Caco-2 (cell line): ENCODE measurements at regions of chr11 and their contacts with region 1.

Region 1: DNA sequence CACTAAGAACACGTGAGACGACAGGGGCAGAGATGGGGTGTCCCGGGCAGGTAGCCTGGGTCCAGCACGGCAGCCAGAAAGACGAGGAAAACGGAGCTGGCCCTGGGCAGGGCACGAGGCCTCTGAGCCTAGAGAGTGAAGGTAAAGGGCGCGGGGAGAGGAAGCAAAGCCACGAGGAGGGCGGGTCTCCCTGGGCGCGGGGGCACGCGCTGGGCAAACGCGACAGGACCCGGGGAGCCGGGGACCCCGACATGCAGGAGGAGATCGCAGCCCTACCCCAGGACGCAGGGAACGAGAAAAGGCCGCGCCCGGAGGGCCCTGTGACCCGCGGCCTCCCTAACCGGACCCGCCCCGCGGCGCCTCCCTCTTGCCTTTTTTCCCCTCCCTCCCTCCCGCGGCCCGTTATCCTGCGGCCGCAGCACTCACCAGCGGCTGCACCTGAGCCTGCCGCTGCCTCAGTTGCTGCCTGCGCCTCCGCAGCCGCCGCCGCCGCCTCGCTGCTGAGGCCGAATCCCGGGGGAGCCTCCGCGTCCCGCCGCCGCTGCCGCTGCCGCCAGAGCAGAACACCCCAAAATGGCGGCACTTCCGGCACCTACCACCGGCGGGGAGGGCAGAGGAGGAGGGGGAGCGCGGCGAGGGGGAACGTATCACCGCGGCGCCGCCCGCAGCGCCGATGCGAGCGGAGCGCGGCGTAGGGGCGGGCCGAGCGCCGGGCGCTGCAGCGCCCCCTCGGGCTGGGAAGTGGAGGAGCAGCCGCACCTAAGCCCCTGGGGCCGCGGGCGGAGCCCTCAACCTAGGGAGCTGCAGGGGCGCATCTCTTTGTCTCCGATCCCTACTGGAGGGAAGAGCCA is at the start of gene CELF1:
- DNase-seq: peak; percentile 92 to 95
- H3K4me3 ChIP-seq: peak within 1 kb of the TSS; percentile 96
- H3K4me3 Mint-ChIP-seq: peak within 1 kb of the TSS; percentile 94
- H3K27ac Mint-ChIP-seq: peak within 1 kb of the TSS; percentile 93
- H3K4me1 ChIP-seq: peaks cover 6% of the 10 kb centered on the region; the same call in 1 of the 2 replicates
- H3K4me1 Mint-ChIP-seq: peaks cover 8% of the 10 kb centered on the region
- H3K27me3 ChIP-seq: no peaks in the 10 kb centered on the region
- H3K27me3 Mint-ChIP-seq: no peaks in the 10 kb centered on the region
- CTCF ChIP-seq: peak; percentile 74 to 91
- total RNA-seq, gene CELF1: 146 and 152 TPM in 2 replicates

Region 2: DNA sequence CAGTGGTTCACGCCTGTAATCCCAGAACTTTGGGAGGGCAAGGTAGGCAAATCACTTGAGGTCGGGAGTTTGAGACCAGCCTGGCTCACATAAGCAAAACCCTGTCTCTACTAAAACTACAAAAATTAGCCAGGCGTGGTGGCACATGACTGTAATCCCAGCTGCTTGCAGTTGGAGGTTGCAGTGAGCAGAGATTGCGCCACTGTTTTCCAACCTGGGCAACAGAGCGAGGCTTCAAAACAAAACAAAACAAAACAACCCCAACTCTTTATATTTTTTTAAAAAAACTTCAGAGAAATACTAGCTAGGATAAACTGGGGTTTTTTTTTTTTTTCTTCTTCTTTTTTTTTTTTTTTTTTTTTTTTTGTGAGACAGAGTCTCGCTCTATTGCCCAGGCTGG is 72.0 kb before region 1 on chr11:
- CTCF ChIA-PET with region 1: no interaction called
- POLR2A ChIA-PET with region 1: no interaction called
- intact Hi-C with region 1: loop called (anchors 10 kb)
- DNase-seq: no peak
- H3K4me3 ChIP-seq: no peak overlapping the region
- H3K4me3 Mint-ChIP-seq: no peak overlapping the region
- H3K27ac Mint-ChIP-seq: no peak overlapping the region
- H3K4me1 ChIP-seq: no peaks in the 10 kb centered on the region
- H3K4me1 Mint-ChIP-seq: no peaks in the 10 kb centered on the region
- H3K27me3 ChIP-seq: no peaks in the 10 kb centered on the region
- H3K27me3 Mint-ChIP-seq: no peaks in the 10 kb centered on the region
- CTCF ChIP-seq: no peak

Region 3: DNA sequence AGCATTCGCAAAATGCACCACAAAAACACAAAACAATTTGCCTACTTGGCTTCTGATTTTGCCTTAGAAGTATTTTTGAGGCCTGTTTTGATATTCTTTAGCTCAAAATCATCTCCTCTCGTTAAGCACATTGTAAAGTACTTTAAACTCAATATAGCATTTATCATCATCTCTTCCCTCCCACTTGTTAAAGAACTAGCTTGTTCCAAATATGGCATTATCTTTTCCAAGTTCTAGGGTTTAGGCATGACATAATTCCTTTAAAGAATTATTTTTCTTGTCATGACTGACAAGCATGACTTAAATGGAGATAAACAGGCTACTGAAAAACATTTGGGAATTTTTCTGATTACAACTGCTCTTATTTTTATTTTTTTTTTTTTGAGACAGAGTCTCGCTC is 21.1 kb before region 1 on chr11:
- CTCF ChIA-PET with region 1: interaction called, 5 read pairs
- POLR2A ChIA-PET with region 1: no interaction called
- intact Hi-C with region 1: loop called (anchors 2 kb)
- DNase-seq: no peak
- H3K4me3 ChIP-seq: no peak overlapping the region
- H3K4me3 Mint-ChIP-seq: no peak overlapping the region
- H3K27ac Mint-ChIP-seq: no peak overlapping the region
- H3K4me1 ChIP-seq: peaks cover 26% of the 10 kb centered on the region
- H3K4me1 Mint-ChIP-seq: peaks cover 13% of the 10 kb centered on the region
- H3K27me3 ChIP-seq: no peaks in the 10 kb centered on the region
- H3K27me3 Mint-ChIP-seq: no peaks in the 10 kb centered on the region
- CTCF ChIP-seq: no peak

Region 4: GRCh38 chr11:47538741-47539574 is 13.8 kb before region 1 on chr11:
- CTCF ChIA-PET with region 1: interaction called, 11 read pairs
- POLR2A ChIA-PET with region 1: interaction called, 5 read pairs
- intact Hi-C with region 1: no loop called
- DNase-seq: no peak
- H3K4me3 ChIP-seq: no peak overlapping the region
- H3K4me3 Mint-ChIP-seq: no peak overlapping the region
- H3K27ac Mint-ChIP-seq: no peak overlapping the region
- H3K4me1 ChIP-seq: no peaks in the 10 kb centered on the region; the same call in 1 of the 2 replicates
- H3K4me1 Mint-ChIP-seq: peaks cover 11% of the 10 kb centered on the region
- H3K27me3 ChIP-seq: no peaks in the 10 kb centered on the region
- H3K27me3 Mint-ChIP-seq: no peaks in the 10 kb centered on the region
- CTCF ChIP-seq: no peak

Region 5: GRCh38 chr11:47565340-47566148 is 12.8 kb after region 1 on chr11 and contains the start of gene PTPMT1:
- CTCF ChIA-PET with region 1: interaction called, 16 read pairs
- POLR2A ChIA-PET with region 1: interaction called, 4 read pairs
- intact Hi-C with region 1: loop called (anchors 1 kb)
- DNase-seq: peak; percentile 92 to 93
- H3K4me3 ChIP-seq: peak within 1 kb of the TSS; percentile 97
- H3K4me3 Mint-ChIP-seq: peak within 1 kb of the TSS; percentile 77
- H3K27ac Mint-ChIP-seq: peak within 1 kb of the TSS; percentile 82
- H3K4me1 ChIP-seq: no peaks in the 10 kb centered on the region; the same call in 1 of the 2 replicates
- H3K4me1 Mint-ChIP-seq: no peaks in the 10 kb centered on the region
- H3K27me3 ChIP-seq: no peaks in the 10 kb centered on the region
- H3K27me3 Mint-ChIP-seq: no peaks in the 10 kb centered on the region
- CTCF ChIP-seq: no peak
- total RNA-seq, gene PTPMT1: 100 and 108 TPM in 2 replicates

Region 6: GRCh38 chr11:47578524-47579460 is 26.0 kb after region 1 on chr11 and contains the starts of genes KBTBD4 and NDUFS3:
- CTCF ChIA-PET with region 1: interaction called, 4 read pairs
- POLR2A ChIA-PET with region 1: interaction called, 4 read pairs
- intact Hi-C with region 1: loop called (anchors 1 kb)
- DNase-seq: peak; percentile 93 to 94
- H3K4me3 ChIP-seq: peak within 1 kb of the TSS; percentile 95
- H3K4me3 Mint-ChIP-seq: peak within 1 kb of the TSS; percentile 91
- H3K27ac Mint-ChIP-seq: peak within 1 kb of the TSS; percentile 95
- H3K4me1 ChIP-seq: peaks cover 5% of the 10 kb centered on the region; the same call in 1 of the 2 replicates
- H3K4me1 Mint-ChIP-seq: peaks cover 6% of the 10 kb centered on the region
- H3K27me3 ChIP-seq: no peaks in the 10 kb centered on the region
- H3K27me3 Mint-ChIP-seq: no peaks in the 10 kb centered on the region
- CTCF ChIP-seq: no peak
- total RNA-seq, gene KBTBD4: 11.9 and 12.5 TPM in 2 replicates
- total RNA-seq, gene NDUFS3: 183 and 185 TPM in 2 replicates